ENCODE measurements at regions of chr20 and their contacts with region 1.

Region 1: GRCh38 chr20:1844325-1845162 is 50.7 kb upstream of the SIRPA start:
- DNase-seq: no peak

Region 2: GRCh38 chr20:1199212-1199873 is 645.2 kb before region 1 on chr20:
- intact Hi-C with region 1: loop called in 1 of 2 experiments (anchors 5 kb)
- DNase-seq: no peak

Region 3: GRCh38 chr20:1631309-1632151 is 213.0 kb before region 1 on chr20:
- intact Hi-C with region 1: no loop called
- DNase-seq: no peak

Region 4: DNA sequence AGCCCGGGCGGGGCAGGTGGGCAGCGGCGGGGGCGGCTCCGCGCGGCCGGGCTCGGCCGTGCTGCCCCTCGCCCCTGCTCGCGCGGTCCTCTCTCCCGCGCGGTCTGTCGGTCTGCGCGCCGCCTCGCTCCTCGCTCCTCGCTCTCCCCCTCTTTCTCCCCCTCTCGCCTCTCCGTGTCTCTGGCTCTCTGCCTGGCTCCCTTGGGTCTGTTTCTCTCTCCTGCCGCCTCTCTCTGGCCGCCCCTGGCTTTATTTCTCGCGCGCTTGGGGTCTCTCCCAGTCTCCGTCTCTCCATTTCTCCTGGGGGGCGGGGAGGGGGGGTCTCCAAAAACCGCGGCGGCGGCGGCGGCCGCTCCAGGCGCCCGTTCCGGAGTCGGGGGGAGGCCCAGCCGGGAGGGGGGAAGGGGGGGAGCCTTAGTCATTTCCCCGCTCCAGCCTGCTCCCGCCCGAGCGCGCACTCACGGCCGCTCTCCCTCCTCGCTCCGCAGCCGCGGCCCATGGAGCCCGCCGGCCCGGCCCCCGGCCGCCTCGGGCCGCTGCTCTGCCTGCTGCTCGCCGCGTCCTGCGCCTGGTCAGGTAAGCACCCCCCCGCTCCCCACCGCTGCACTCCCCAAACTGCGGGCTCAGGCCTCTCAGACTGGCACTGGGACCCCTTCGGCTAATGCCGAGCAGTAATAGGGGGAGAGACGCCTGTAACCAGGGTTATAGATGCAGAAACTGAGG is 50.6 kb after region 1 on chr20 and contains the start of gene SIRPA:
- intact Hi-C with region 1: loop called in 1 of 2 experiments (anchors 1 kb)
- DNase-seq: peak; percentile 91
- total RNA-seq, gene SIRPA: 39.7 to 42.1 TPM

Region 5: DNA sequence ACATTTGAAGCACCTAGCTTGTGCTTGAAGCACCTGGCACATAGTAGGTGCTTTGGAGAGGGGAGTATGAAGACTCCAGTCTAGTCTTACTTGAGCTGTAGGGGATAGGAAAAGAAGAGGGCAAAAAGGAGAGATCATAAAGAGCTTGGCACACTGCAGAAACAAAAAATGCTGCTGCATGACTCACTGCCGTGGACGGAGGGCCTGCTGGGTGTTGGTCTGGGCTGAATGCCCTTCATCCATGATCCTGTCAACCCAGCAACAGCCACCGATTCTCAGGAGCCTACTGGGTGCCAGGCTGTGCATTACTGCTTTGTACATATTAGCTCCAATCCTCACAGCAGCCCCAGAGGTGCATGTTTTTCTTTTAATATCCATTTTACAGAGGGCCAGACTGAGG is 143.3 kb after region 1 on chr20:
- intact Hi-C with region 1: loop called in 1 of 2 experiments (anchors 5 kb)
- DNase-seq: no peak

Measured in posterior vena cava (tissue), 2 donors.